ENCODE measurements at regions of chr10 and their contacts with region 1.

Region 1: DNA sequence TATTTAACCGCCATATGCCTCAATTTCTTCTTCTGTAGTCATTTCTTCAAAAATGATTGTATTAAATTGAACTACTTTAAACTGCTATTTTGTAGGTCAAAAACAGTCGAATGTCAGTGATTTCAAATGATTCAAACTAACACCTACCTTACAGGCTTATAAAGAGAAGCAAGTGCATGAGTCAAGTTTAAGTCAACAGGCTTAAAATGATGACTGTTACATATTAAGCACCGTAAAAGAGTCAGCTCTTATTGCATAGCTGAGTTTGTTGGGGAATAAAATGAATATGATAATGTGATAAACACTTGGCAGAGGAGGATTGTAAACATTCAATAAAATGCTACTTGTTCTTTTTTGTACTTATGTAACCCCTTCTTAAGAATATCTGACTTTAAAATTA is 90.1 kb upstream of the ANKRD1 start:
- DNase-seq: no peak
- ATAC-seq: no peak
- H3K4me3 ChIP-seq: no peak overlapping the region
- H3K27ac ChIP-seq: no peak overlapping the region
- H3K4me1 ChIP-seq: no peaks in the 10 kb centered on the region
- H3K27me3 ChIP-seq: no peaks in the 10 kb centered on the region
- CTCF ChIP-seq: no peak

Region 2: DNA sequence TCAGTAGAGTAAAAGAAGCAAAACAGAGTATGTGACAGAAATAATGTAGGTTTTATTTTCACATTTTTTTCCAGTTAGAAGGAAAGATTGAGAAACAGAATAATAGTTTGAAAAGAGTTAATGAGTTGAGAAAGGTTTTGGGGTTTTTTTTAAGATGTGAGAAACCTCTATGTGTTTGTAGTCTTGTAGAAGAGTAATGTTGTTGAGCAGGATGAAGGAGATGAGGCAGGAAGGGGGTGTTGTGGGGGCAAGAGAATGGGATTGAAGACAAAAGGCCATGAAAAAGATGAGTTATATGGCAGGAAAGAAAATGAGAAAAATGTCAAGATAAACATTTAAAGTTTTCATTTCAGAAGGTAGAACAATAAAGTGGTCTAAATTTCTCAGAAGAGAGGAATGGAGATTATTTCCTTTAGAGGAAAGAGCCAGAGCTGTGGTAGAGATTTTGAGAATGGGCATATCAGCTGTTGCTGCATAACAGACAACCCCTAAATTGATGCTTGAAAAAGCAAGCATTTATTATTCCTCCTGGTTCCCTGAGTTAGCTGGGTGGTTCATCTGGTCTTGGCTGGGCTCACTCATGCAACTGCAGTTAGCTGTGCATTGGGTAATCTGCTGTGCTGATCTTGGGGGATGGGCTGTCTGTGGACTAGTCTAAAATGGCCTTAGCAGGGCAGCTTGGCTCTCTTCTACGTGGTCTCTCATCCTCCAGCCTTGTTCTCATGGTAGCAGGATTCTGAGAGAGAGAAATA is 236.6 kb after region 1 on chr10:
- intact Hi-C with region 1: loop called (anchors 10 kb)
- DNase-seq: no peak
- ATAC-seq: peak; percentile 53
- H3K4me3 ChIP-seq: no peak overlapping the region
- H3K27ac ChIP-seq: no peak overlapping the region
- H3K4me1 ChIP-seq: peaks cover 5% of the 10 kb centered on the region
- H3K27me3 ChIP-seq: no peaks in the 10 kb centered on the region
- CTCF ChIP-seq: no peak